ENCODE measurements at regions of chr6 and their contacts with region 1.

Region 1: DNA sequence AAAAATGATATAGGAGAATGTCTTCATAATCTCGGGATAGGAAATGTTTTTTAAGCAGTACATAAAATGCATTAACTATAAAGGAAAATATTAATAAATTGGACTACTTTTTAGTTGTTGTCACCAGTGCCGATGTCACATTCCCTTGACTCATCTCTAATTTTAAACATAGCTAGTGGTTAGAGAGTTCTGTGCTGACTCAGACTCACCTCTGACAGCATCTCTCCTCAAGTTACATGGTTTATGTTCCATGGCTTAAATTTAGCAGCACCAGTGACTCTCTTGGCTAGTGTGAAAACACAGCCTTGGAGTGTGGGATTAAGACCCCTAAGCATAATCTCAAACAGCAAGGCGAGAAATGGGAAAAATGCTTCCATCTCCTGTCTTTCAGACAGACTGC is 311.8 kb upstream of the MMS22L start:
- DNase-seq: no peak

Region 2: DNA sequence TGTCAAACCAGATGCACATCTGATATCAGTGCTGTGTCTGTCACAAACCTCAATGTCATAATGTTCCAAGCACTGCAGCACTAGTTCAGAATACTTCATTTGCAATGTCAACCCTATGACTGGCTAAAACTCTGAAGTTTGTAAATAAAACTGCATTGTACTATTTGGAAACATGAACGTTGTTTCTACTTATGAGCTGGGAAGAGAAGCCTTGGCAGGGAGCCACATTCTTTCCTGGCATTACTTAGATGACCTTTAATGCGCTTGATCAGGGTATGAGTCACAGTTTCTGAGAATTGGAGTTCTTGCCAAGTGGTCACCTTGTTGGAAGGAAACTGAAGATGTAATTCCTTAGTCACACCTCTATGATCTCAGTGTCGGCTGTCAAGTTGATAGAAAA is 353.0 kb after region 1 on chr6:
- intact Hi-C with region 1: loop called (anchors 5 kb)
- DNase-seq: no peak